Activated CD4-positive, alpha-beta T cell treated with anti-CD3 and anti-CD28 coated beads, Interleukin-2, amount 10 ng/mL, durations not matched to agents 7 days and 5 days (primary cell): ENCODE measurements at regions of chr2 and their contacts with region 1.

Region 1: DNA sequence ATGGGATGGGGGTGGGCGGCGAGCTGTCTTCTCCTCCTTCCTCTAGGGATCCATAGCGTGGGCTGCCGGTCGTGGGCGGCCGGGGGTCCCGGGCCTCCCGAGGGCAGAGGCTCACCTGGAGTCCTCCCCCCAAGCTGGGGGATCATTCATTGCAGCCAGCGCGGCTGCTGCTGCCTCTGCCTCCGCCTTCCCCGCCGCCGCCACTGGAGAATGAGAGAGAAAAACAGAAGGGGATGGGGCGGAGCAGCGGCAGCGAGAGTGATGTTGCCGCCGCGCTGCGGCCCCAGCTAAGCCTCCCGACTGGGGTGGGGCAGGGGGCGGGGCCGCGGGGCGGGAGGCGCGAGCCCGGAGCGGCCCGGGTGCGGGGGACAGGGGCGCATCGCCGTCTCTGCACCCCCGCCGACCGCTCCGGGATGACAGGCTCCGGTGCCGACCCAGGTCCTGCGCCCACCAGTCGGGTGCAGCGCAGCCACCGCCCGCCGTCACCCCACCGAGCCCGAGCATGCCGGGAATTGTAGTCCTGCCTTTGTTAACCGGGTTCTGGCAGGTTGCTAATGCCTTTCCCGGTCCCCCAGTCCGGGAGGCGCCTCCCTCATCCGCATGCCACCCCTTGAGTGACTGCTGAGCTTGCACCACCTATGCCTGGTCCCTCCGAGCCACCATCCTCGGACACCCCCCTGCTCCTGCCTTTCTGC is at the start of gene KIF3C:
- DNase-seq: peak; percentile 82
- H3K4me3 Mint-ChIP-seq: peak within 1 kb of the TSS; percentile 84
- H3K27ac Mint-ChIP-seq: peak within 1 kb of the TSS; percentile 85
- H3K4me1 Mint-ChIP-seq: peaks cover 17% of the 10 kb centered on the region
- H3K27me3 Mint-ChIP-seq: no peaks in the 10 kb centered on the region
- total RNA-seq, gene KIF3C: 7.0 to 7.5 TPM

Region 2: GRCh38 chr2:26043862-26044696 is 61.7 kb after region 1 on chr2:
- CTCF ChIA-PET with region 1: no interaction called
- POLR2A ChIA-PET with region 1: no interaction called
- DNase-seq: no peak
- H3K4me3 Mint-ChIP-seq: peak overlapping the region; percentile 0
- H3K27ac Mint-ChIP-seq: peak overlapping the region; percentile 27
- H3K4me1 Mint-ChIP-seq: peaks cover 45% of the 10 kb centered on the region
- H3K27me3 Mint-ChIP-seq: no peaks in the 10 kb centered on the region

Region 3: GRCh38 chr2:26144953-26145680 is 162.7 kb after region 1 on chr2:
- CTCF ChIA-PET with region 1: interaction called, 10 read pairs
- POLR2A ChIA-PET with region 1: no interaction called
- DNase-seq: peak; percentile 75
- H3K4me3 Mint-ChIP-seq: no peak overlapping the region
- H3K27ac Mint-ChIP-seq: no peak overlapping the region
- H3K4me1 Mint-ChIP-seq: peaks cover 2% of the 10 kb centered on the region
- H3K27me3 Mint-ChIP-seq: peaks cover 9% of the 10 kb centered on the region